Activated B cell treated with CpG ODN at 0.5 μM for 24 hours (primary cell): ENCODE measurements at regions of chr19 and their contacts with region 1.

Region 1: DNA sequence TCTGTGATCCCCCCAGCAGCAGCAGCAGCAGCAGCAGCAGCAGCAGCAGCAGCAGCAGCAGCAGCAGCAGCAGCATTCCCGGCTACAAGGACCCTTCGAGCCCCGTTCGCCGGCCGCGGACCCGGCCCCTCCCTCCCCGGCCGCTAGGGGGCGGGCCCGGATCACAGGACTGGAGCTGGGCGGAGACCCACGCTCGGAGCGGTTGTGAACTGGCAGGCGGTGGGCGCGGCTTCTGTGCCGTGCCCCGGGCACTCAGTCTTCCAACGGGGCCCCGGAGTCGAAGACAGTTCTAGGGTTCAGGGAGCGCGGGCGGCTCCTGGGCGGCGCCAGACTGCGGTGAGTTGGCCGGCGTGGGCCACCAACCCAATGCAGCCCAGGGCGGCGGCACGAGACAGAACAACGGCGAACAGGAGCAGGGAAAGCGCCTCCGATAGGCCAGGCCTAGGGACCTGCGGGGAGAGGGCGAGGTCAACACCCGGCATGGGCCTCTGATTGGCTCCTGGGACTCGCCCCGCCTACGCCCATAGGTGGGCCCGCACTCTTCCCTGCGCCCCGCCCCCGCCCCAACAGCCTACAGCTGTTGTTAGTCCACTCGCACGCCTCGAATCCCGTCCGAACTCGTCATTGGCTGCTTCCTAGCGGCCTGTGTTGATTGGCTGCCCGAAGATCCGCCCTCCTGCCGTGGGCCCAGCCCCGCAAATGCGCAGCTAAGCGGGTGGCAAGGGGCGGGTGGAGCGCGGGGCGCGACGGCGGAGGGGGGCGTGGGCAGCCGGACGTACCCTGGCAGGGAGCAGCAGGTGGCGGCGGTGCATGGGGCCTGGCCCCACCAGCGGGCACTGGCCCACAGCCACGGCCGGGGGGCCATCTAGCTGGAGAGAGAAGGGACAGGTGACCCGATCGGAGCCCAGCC is 1.4 kb upstream of the SIX5 start:
- DNase-seq: peak; percentile 93
- ATAC-seq: peak; percentile 69
- H3K4me3 Mint-ChIP-seq: peak overlapping the region; percentile 89
- H3K27ac Mint-ChIP-seq: peak overlapping the region; percentile 88
- H3K4me1 Mint-ChIP-seq: peaks cover 19% of the 10 kb centered on the region
- H3K27me3 Mint-ChIP-seq: peaks cover 3% of the 10 kb centered on the region
- CTCF ChIP-seq: peak; percentile 71

Region 2: DNA sequence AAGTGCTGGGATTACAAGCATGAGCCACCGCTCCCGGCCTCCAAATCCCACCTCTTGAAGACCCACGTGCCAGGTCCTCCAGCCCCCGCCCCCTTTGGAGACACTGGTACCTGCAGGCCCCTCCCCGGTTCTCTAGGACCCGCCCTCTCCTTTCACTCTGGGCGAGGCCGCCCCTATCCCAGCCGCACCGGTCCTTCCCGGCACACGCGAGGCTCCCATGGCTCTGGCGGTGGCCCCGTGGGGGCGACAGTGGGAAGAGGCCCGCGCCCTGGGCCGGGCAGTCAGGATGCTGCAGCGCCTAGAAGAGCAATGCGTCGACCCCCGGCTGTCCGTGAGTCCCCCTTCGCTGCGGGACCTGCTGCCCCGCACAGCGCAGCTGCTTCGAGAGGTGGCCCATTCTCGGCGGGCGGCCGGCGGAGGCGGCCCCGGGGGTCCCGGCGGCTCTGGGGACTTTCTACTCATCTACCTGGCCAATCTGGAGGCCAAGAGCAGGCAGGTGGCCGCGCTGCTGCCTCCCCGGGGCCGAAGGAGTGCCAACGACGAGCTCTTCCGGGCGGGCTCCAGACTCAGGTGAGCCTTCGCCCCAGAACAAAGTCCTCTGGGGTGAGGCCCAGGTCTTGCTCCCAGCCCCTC is 992.6 kb before region 1 on chr19 and contains the start of gene CBLC:
- CTCF ChIA-PET with region 1: no interaction called
- POLR2A ChIA-PET with region 1: no interaction called
- intact Hi-C with region 1: no loop called
- DNase-seq: no peak
- ATAC-seq: no peak
- H3K4me3 Mint-ChIP-seq: no peak within 1 kb of the TSS
- H3K27ac Mint-ChIP-seq: no peak within 1 kb of the TSS
- H3K4me1 Mint-ChIP-seq: no peaks in the 10 kb centered on the region
- H3K27me3 Mint-ChIP-seq: peaks cover 6% of the 10 kb centered on the region
- CTCF ChIP-seq: no peak
- total RNA-seq, gene CBLC: not detected in 2 replicates

Region 3: GRCh38 chr19:45423589-45424190 is 346.8 kb before region 1 on chr19 and contains the start of gene ERCC1:
- CTCF ChIA-PET with region 1: no interaction called
- POLR2A ChIA-PET with region 1: no interaction called
- intact Hi-C with region 1: loop called (anchors 10 kb)
- DNase-seq: peak; percentile 79
- ATAC-seq: peak; percentile 74
- H3K4me3 Mint-ChIP-seq: peak within 1 kb of the TSS; percentile 96
- H3K27ac Mint-ChIP-seq: peak within 1 kb of the TSS; percentile 89
- H3K4me1 Mint-ChIP-seq: peaks cover 65% of the 10 kb centered on the region
- H3K27me3 Mint-ChIP-seq: no peaks in the 10 kb centered on the region
- CTCF ChIP-seq: no peak
- total RNA-seq, gene ERCC1: 69.2 and 71.6 TPM in 2 replicates

Region 4: DNA sequence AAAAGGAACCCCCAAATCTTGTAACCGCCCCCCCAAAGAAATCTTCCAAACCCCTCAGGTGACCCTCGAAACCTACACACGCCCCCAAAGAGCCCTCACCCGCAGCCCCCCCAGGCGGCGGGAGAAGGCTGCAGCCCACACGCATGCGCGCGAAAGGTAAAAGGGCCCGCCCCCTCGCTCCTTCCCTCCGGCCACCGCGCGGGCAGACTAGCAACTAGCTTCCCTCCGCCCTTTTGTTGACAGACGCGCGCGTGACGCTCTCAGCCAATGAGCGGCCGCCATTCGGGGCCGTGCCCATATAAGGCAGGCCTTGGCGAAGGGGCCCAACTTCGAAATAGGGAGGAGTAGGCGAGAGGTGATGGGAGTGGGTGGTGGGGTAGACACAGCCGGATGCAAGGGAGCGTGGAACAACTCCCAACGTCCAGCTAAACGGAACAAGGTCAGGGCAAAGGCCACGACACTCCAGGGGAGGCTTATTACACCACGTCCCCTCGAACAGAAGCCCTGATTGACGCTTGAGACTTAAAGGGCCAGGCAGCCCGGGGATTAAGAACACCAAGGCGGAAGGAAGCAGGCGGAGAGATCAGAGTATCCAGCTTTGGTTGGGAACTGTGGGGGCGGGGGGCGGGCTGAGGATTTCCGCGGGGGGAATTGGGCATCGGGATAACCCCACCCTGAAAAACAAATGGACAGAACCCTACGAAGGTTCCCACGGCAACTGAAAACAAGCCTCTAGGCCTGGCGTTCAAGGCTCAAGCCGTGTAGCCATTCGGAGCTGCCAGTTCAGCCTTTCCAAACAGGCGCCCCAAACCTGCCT is 53.1 kb before region 1 on chr19:
- CTCF ChIA-PET with region 1: interaction called, 4 read pairs
- POLR2A ChIA-PET with region 1: interaction called, 45 read pairs
- intact Hi-C with region 1: loop called (anchors 1 kb)
- DNase-seq: peak; percentile 92
- ATAC-seq: peak; percentile 95
- H3K4me3 Mint-ChIP-seq: peak overlapping the region; percentile 96
- H3K27ac Mint-ChIP-seq: peak overlapping the region; percentile 92
- H3K4me1 Mint-ChIP-seq: peaks cover 35% of the 10 kb centered on the region
- H3K27me3 Mint-ChIP-seq: no peaks in the 10 kb centered on the region
- CTCF ChIP-seq: no peak

Region 5: DNA sequence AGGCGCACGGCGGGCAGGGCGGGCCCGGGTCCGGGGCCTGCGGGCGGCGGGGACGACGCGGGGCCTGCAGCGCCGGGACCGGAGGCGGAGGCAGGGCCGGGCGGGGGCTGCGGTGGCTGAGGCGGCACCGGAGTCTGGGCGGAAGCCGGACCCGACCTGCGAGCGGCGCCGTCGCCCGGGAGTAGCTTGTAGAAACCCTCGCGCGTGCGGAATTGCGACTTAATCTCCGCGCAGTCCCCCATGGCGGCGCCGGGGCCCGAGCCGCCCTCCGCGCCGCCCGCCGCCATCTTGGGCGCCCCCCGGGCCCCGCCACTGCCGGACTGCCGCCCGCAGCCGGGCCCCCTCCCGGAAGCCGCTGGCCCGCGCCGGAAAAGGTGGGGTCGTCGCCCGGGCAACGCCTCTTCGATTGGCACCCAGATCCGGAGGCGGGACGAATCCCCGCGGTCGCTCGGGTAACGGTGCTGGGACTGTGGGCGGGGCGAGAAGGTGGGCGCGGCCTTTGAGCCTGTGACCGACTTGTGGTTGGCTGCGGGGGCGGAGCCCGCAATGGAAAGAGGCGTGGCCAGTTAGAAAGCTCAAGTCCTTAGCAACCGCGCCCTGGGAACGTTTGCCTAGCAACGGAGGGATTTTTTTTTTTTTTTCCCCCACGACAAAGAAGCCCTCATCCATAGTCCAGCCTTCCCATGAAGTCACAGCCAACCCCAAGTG is 22.2 kb after region 1 on chr19 and contains the start of gene DMWD:
- CTCF ChIA-PET with region 1: interaction called, 172 read pairs
- POLR2A ChIA-PET with region 1: interaction called, 46 read pairs
- intact Hi-C with region 1: loop called (anchors 1 kb)
- DNase-seq: peak; percentile 100
- ATAC-seq: peak; percentile 96
- H3K4me3 Mint-ChIP-seq: peak within 1 kb of the TSS; percentile 88
- H3K27ac Mint-ChIP-seq: peak within 1 kb of the TSS; percentile 76
- H3K4me1 Mint-ChIP-seq: peaks cover 27% of the 10 kb centered on the region
- H3K27me3 Mint-ChIP-seq: peaks cover 5% of the 10 kb centered on the region
- CTCF ChIP-seq: no peak
- total RNA-seq, gene DMWD: 64.7 and 77.3 TPM in 2 replicates

Region 6: DNA sequence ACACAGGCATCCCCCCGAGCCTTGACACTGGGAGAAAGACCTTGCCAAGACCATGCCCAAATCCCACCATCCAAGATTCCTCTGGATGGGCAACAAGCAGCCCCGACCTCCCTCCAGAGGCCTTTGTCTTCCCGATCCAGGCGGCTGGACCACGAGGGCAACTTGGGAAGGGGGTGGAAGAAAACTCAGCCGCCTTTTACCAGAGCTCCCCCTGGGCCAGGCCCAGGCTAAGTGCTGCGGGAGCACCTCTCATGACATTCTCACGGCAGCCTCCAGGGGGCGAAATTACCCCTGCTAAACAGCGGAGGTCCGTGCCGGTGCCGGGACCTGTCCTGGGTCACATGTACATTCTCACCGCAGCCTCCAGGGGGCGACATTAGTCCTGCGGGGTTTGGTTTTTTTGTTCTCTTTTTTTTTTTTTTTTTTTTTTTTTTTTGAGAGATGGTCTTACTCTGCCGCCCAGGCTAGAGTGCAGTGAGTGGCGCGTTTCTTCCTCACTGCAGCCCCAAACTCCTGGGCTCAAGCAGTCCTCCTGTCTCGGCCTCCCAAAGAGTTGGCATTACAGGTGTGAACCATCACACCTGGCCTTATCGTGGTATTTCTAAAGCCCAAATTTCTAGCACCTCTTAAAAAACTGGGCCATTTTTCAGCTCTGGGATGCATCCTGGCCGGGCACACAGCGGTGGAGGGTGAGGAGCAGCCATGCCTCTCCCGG is 46.7 kb after region 1 on chr19:
- CTCF ChIA-PET with region 1: no interaction called
- POLR2A ChIA-PET with region 1: no interaction called
- intact Hi-C with region 1: loop called (anchors 1 kb)
- DNase-seq: peak; percentile 94
- ATAC-seq: peak; percentile 100
- H3K4me3 Mint-ChIP-seq: no peak overlapping the region
- H3K27ac Mint-ChIP-seq: peak overlapping the region; percentile 68
- H3K4me1 Mint-ChIP-seq: peaks cover 9% of the 10 kb centered on the region
- H3K27me3 Mint-ChIP-seq: no peaks in the 10 kb centered on the region
- CTCF ChIP-seq: peak; percentile 65

Region 7: DNA sequence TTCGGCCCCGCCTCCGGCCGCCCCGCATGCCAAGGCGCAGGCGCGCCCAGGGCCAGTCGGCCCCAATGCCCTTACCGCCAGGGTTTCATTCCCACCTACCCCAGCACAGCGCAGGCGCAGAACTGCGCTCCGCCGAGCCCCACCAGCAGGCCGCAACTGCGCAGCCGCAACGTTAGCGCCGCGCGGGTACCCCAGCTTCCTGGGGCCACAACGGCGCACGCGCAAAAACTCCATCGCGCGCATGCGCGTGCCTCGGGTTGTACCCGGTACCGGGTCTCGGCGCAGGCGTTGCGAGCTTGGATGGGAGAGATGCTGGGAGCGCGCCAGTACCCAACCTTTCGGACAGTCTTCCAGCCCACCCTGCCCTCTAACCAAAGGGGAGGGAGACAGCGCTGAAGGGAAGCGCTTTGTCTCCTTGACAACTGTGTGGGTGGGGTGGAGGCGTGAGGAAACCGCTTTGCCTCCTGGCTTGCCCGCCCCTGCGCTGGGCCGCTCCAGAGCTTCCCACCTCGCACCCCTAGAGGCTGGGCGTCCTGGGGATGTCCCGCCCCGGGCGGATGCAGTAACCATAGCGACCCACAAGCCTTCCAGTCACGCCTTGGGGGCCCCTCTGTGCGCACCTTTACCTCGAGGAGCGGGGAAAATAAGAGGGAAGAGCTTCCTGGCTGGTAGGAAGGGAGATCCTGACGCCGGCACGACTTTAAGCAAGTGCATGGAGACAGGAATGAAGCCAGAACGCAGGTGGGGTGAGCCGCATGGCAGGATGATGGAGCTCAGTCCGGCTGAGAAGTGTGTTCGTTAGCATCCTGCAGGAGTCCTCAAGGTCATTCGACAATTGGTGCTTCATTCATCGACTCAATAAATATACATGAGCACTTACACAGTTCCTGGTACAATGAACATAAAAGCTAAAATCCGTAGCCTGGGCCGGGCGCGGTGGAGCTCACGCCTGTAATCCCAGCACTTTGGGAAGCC is 132.5 kb after region 1 on chr19:
- CTCF ChIA-PET with region 1: no interaction called
- POLR2A ChIA-PET with region 1: interaction called, 10 read pairs
- intact Hi-C with region 1: no loop called
- DNase-seq: peak; percentile 99
- ATAC-seq: peak; percentile 82
- H3K4me3 Mint-ChIP-seq: peak overlapping the region; percentile 90
- H3K27ac Mint-ChIP-seq: peak overlapping the region; percentile 82
- H3K4me1 Mint-ChIP-seq: peaks cover 24% of the 10 kb centered on the region
- H3K27me3 Mint-ChIP-seq: no peaks in the 10 kb centered on the region
- CTCF ChIP-seq: no peak

Region 8: DNA sequence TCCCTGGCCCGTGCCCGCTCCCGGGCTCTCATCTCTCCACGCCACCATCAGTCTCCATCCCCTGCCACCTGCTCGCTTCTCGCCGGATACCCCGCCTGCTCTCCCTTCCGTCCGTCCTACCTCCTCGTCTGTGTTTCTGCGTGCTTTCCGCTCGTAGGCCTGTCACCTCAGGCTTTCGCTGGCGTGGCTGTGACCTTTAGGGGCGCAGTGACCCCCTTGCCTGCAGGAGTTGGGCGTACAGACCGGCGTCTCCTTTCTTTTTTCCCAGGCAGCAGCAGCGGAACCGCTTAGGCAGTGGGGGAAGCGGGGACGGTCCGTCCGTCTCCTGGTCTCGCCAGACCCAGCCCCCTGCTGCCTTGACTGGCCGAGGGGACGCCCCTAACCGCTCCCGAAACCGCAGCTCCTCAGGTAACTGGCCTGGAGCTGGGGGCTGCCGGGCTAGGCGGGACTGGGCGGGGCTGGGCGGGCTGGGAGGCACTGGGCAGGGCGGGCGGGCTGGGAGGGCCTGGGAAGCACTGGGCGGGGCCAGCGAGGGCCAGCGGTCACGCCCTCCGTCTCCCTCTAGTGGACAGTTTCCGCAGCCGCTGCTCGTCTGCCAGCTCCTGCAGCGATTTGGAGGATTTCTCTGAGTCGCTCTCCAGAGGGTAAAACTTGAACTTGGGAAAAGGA is 246.1 kb after region 1 on chr19:
- CTCF ChIA-PET with region 1: interaction called, 9 read pairs
- POLR2A ChIA-PET with region 1: no interaction called
- intact Hi-C with region 1: loop called (anchors 2 kb)
- DNase-seq: peak; percentile 74
- ATAC-seq: peak; percentile 82
- H3K4me3 Mint-ChIP-seq: peak overlapping the region; percentile 85
- H3K27ac Mint-ChIP-seq: peak overlapping the region; percentile 8
- H3K4me1 Mint-ChIP-seq: peaks cover 19% of the 10 kb centered on the region
- H3K27me3 Mint-ChIP-seq: peaks cover 12% of the 10 kb centered on the region
- CTCF ChIP-seq: no peak